Activated CD4-positive, alpha-beta memory T cell treated with anti-CD3 and anti-CD28 coated beads for 36 hours (primary cell): ENCODE measurements at regions of chr11 and their contacts with region 1.

Region 1: GRCh38 chr11:65859200-65859811 is 927 bp upstream of the MUS81 start:
- DNase-seq: peak; percentile 99
- H3K4me3 Mint-ChIP-seq: peak overlapping the region; percentile 98
- H3K27ac Mint-ChIP-seq: peak overlapping the region; percentile 99
- H3K4me1 Mint-ChIP-seq: peaks cover 42% of the 10 kb centered on the region
- H3K27me3 Mint-ChIP-seq: no peaks in the 10 kb centered on the region

Region 2: GRCh38 chr11:65382033-65382807 is 477.1 kb before region 1 on chr11 and contains the start of gene SLC25A45:
- CTCF ChIA-PET with region 1: no interaction called
- POLR2A ChIA-PET with region 1: no interaction called
- intact Hi-C with region 1: loop called (anchors 1 kb)
- DNase-seq: peak; percentile 97
- H3K4me3 Mint-ChIP-seq: peak within 1 kb of the TSS; percentile 85
- H3K27ac Mint-ChIP-seq: peak within 1 kb of the TSS; percentile 97
- H3K4me1 Mint-ChIP-seq: peaks cover 41% of the 10 kb centered on the region
- H3K27me3 Mint-ChIP-seq: no peaks in the 10 kb centered on the region
- total RNA-seq, gene SLC25A45: 14.4 to 16.1 TPM

Region 3: GRCh38 chr11:65637794-65638317 is 221.4 kb before region 1 on chr11 and contains the start of gene SIPA1:
- CTCF ChIA-PET with region 1: no interaction called
- POLR2A ChIA-PET with region 1: no interaction called
- intact Hi-C with region 1: no loop called
- DNase-seq: peak; percentile 75
- H3K4me3 Mint-ChIP-seq: peak within 1 kb of the TSS; percentile 85
- H3K27ac Mint-ChIP-seq: peak within 1 kb of the TSS; percentile 95
- H3K4me1 Mint-ChIP-seq: peaks cover 38% of the 10 kb centered on the region
- H3K27me3 Mint-ChIP-seq: no peaks in the 10 kb centered on the region
- total RNA-seq, gene SIPA1: 163 to 167 TPM

Region 4: DNA sequence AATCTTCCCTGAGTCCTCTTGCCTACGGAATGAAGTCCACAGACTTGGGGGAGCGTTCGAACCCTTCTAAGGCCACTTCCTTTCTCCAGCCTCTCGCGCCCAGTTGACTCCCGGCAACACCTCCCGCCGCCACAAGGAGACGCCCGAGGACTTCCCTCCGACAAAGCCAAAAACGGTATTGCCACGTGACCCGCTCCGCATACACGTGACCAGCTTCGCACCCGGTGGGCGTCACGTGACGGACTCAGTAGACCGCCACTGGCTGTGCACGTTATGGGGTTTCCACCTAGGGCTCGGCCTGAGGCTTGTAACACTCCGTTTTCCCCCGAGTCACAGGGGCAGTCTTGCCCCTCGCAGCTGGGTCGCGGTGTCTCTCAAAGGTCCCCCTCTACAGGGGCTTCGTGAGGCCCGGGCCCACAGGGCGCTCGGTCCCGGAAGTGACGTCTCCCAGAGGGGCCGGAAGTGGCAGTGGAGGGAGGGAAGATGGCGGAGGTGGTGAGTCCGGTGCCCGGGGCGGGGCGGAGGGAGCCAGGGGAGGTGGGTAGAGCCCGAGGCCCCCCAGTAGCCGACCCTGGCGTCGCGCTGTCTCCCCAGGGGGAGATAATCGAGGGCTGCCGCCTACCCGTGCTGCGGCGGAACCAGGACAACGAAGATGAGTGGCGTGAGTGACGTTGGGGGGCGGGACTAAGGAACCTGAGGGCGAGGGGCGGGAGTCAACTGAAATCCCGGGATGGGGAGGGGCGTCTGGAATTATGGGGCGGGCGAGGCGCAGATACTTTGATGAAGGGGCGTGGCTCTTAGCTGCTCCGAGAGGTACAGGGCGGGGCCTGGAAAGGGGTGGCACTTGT is 147.3 kb before region 1 on chr11 and contains the start of gene KAT5:
- CTCF ChIA-PET with region 1: interaction called, 22 read pairs
- POLR2A ChIA-PET with region 1: interaction called, 3 read pairs
- intact Hi-C with region 1: loop called (anchors 1 kb)
- DNase-seq: peak; percentile 99
- H3K4me3 Mint-ChIP-seq: peak within 1 kb of the TSS; percentile 90
- H3K27ac Mint-ChIP-seq: peak within 1 kb of the TSS; percentile 97
- H3K4me1 Mint-ChIP-seq: peaks cover 27% of the 10 kb centered on the region
- H3K27me3 Mint-ChIP-seq: no peaks in the 10 kb centered on the region
- total RNA-seq, gene KAT5: 55.9 to 61.6 TPM

Region 5: GRCh38 chr11:65833297-65834030 is 25.8 kb before region 1 on chr11 and contains the start of gene SNX32:
- CTCF ChIA-PET with region 1: interaction called, 5 read pairs
- POLR2A ChIA-PET with region 1: interaction called, 16 read pairs
- intact Hi-C with region 1: no loop called
- DNase-seq: peak; percentile 98
- H3K4me3 Mint-ChIP-seq: no peak within 1 kb of the TSS
- H3K27ac Mint-ChIP-seq: no peak within 1 kb of the TSS
- H3K4me1 Mint-ChIP-seq: peaks cover 21% of the 10 kb centered on the region
- H3K27me3 Mint-ChIP-seq: no peaks in the 10 kb centered on the region
- total RNA-seq, gene SNX32: 2.0 to 2.7 TPM

Region 6: DNA sequence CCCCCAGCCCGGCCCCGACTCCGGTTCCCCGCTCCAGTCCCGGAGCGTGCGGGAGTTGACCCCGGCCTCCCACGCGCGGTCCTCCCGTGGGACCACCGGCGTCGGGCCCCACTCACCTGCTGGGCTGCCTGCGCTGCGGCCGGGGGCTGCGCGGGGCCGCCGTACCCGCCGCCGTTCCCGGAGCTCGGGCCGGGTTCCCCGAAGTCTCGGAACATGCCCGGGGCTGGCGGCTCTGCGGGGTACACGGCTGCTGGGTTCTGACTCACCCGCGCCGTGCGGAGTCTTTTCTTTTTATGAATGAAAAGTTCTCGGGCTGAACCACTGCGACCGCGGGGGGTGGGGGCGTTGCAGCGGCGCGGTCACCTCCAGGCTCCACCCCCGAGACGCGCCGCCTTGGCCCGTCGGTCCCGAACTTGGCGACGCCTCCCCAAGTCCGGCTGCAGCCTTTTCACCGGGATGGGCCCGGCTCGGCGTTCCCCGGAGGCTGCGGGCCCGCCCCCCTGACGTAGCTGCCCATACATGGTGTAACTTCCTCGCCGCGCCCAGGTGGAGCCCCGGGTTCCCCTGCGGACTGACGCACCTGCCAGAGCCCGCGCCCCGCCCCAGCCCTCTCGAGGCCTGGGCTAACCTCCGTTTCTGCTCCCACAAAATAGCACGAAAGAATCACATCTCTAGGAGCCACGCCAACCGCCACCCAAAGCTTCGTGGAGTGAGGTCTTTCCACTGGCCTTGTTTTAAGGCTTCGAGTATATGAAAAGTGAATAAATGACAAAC is 41.0 kb after region 1 on chr11 and contains the start of gene FOSL1:
- CTCF ChIA-PET with region 1: interaction called, 9 read pairs
- POLR2A ChIA-PET with region 1: interaction called, 17 read pairs
- intact Hi-C with region 1: loop called (anchors 1 kb)
- DNase-seq: peak; percentile 97
- H3K4me3 Mint-ChIP-seq: peak within 1 kb of the TSS; percentile 75
- H3K27ac Mint-ChIP-seq: peak within 1 kb of the TSS; percentile 80
- H3K4me1 Mint-ChIP-seq: peaks cover 46% of the 10 kb centered on the region
- H3K27me3 Mint-ChIP-seq: peaks cover 4% of the 10 kb centered on the region
- total RNA-seq, gene FOSL1: 17.1 to 17.7 TPM

Region 7: GRCh38 chr11:65988791-65989592 is 129.7 kb after region 1 on chr11:
- CTCF ChIA-PET with region 1: interaction called, 8 read pairs
- POLR2A ChIA-PET with region 1: no interaction called
- intact Hi-C with region 1: loop called (anchors 1 kb)
- DNase-seq: peak; percentile 95
- H3K4me3 Mint-ChIP-seq: no peak overlapping the region
- H3K27ac Mint-ChIP-seq: peak overlapping the region; percentile 74
- H3K4me1 Mint-ChIP-seq: peaks cover 4% of the 10 kb centered on the region
- H3K27me3 Mint-ChIP-seq: no peaks in the 10 kb centered on the region

Region 8: DNA sequence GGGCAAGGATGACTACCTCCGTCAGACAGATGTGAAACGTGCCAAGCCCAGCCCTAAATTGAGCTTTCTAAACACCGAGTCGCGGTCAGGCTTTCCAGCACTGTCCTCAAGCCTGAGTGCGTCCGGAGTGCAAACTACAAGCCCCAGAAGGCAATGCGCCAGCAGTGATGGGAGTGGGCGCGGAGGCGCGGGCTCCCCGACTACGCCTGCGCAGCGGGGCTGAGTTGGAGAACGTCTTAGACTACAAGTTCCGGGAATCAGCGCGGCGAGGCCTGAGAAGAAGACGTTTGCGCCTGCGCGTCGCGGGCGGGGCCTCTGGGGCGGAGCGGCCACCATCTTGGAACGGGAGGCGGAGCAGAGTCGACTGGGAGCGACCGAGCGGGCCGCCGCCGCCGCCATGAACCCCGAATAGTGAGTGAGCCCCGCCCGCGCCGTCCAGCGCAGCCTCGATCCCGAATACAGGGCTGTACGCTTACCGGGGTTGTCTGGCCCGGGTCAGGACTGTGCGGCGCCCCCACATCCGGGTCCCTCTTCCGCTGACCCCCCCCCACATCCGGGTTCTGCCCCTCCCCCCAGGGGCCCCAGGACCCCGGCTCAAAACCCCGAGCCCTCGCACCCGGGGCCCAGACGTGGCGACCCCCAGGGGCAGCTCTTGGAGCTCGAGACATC is 409.1 kb after region 1 on chr11 and contains the start of gene RAB1B:
- CTCF ChIA-PET with region 1: no interaction called
- POLR2A ChIA-PET with region 1: no interaction called
- intact Hi-C with region 1: loop called (anchors 1 kb)
- DNase-seq: peak; percentile 100
- H3K4me3 Mint-ChIP-seq: peak within 1 kb of the TSS; percentile 86
- H3K27ac Mint-ChIP-seq: peak within 1 kb of the TSS; percentile 90
- H3K4me1 Mint-ChIP-seq: peaks cover 32% of the 10 kb centered on the region
- H3K27me3 Mint-ChIP-seq: no peaks in the 10 kb centered on the region
- total RNA-seq, gene RAB1B: 118 to 124 TPM